Caco-2 (cell line): ENCODE measurements at regions of chr6 and their contacts with region 1.

Region 1: GRCh38 chr6:130885392-130886192 is 58.4 kb downstream of the SMLR1 start:
- DNase-seq: peak; percentile 79 to 82
- H3K4me3 ChIP-seq: no peak overlapping the region
- H3K4me3 Mint-ChIP-seq: no peak overlapping the region
- H3K27ac Mint-ChIP-seq: peak overlapping the region; percentile 23
- H3K4me1 ChIP-seq: no peaks in the 10 kb centered on the region
- H3K4me1 Mint-ChIP-seq: peaks cover 13% of the 10 kb centered on the region
- H3K27me3 ChIP-seq: no peaks in the 10 kb centered on the region
- H3K27me3 Mint-ChIP-seq: no peaks in the 10 kb centered on the region
- CTCF ChIP-seq: peak; percentile 81 to 87

Region 2: GRCh38 chr6:130671577-130671976 is 214.0 kb before region 1 on chr6:
- CTCF ChIA-PET with region 1: no interaction called
- POLR2A ChIA-PET with region 1: no interaction called
- intact Hi-C with region 1: no loop called
- DNase-seq: no peak
- H3K4me3 ChIP-seq: no peak overlapping the region
- H3K4me3 Mint-ChIP-seq: no peak overlapping the region
- H3K27ac Mint-ChIP-seq: no peak overlapping the region
- H3K4me1 ChIP-seq: no peaks in the 10 kb centered on the region
- H3K4me1 Mint-ChIP-seq: no peaks in the 10 kb centered on the region
- H3K27me3 ChIP-seq: no peaks in the 10 kb centered on the region
- H3K27me3 Mint-ChIP-seq: peaks cover 2% of the 10 kb centered on the region
- CTCF ChIP-seq: no peak

Region 3: GRCh38 chr6:130848945-130849344 is 36.6 kb before region 1 on chr6:
- CTCF ChIA-PET with region 1: no interaction called
- POLR2A ChIA-PET with region 1: no interaction called
- intact Hi-C with region 1: no loop called
- DNase-seq: no peak
- H3K4me3 ChIP-seq: no peak overlapping the region
- H3K4me3 Mint-ChIP-seq: no peak overlapping the region
- H3K27ac Mint-ChIP-seq: no peak overlapping the region
- H3K4me1 ChIP-seq: peaks cover 12% of the 10 kb centered on the region
- H3K4me1 Mint-ChIP-seq: peaks cover 2% of the 10 kb centered on the region
- H3K27me3 ChIP-seq: no peaks in the 10 kb centered on the region
- H3K27me3 Mint-ChIP-seq: no peaks in the 10 kb centered on the region
- CTCF ChIP-seq: no peak

Region 4: GRCh38 chr6:130933712-130934200 is 48.2 kb after region 1 on chr6:
- CTCF ChIA-PET with region 1: no interaction called
- POLR2A ChIA-PET with region 1: no interaction called
- intact Hi-C with region 1: loop called (anchors 5 kb)
- DNase-seq: peak; percentile 48 to 67
- H3K4me3 ChIP-seq: peak overlapping the region; percentile 13
- H3K4me3 Mint-ChIP-seq: peak overlapping the region; percentile 72
- H3K27ac Mint-ChIP-seq: peak overlapping the region; percentile 63
- H3K4me1 ChIP-seq: peaks cover 57% of the 10 kb centered on the region
- H3K4me1 Mint-ChIP-seq: peaks cover 34% of the 10 kb centered on the region
- H3K27me3 ChIP-seq: no peaks in the 10 kb centered on the region
- H3K27me3 Mint-ChIP-seq: no peaks in the 10 kb centered on the region
- CTCF ChIP-seq: no peak

Region 5: GRCh38 chr6:131063028-131063763 is 177.6 kb after region 1 on chr6 and contains the start of gene EPB41L2:
- CTCF ChIA-PET with region 1: interaction called, 3 read pairs
- POLR2A ChIA-PET with region 1: no interaction called
- intact Hi-C with region 1: loop called (anchors 1 kb)
- DNase-seq: peak; percentile 91 to 95
- H3K4me3 ChIP-seq: peak within 1 kb of the TSS; percentile 97
- H3K4me3 Mint-ChIP-seq: peak within 1 kb of the TSS; percentile 80
- H3K27ac Mint-ChIP-seq: peak within 1 kb of the TSS; percentile 70
- H3K4me1 ChIP-seq: peaks cover 31% of the 10 kb centered on the region
- H3K4me1 Mint-ChIP-seq: peaks cover 25% of the 10 kb centered on the region
- H3K27me3 ChIP-seq: no peaks in the 10 kb centered on the region
- H3K27me3 Mint-ChIP-seq: no peaks in the 10 kb centered on the region
- CTCF ChIP-seq: peak; percentile 19 to 20
- total RNA-seq, gene EPB41L2: 91.7 and 106 TPM in 2 replicates

Region 6: GRCh38 chr6:131116749-131117360 is 231.3 kb after region 1 on chr6:
- CTCF ChIA-PET with region 1: interaction called, 18 read pairs
- POLR2A ChIA-PET with region 1: no interaction called
- intact Hi-C with region 1: loop called (anchors 1 kb)
- DNase-seq: peak in 1 of 2 experiments; percentile 56
- H3K4me3 ChIP-seq: no peak overlapping the region
- H3K4me3 Mint-ChIP-seq: no peak overlapping the region
- H3K27ac Mint-ChIP-seq: no peak overlapping the region
- H3K4me1 ChIP-seq: peaks cover 7% of the 10 kb centered on the region
- H3K4me1 Mint-ChIP-seq: no peaks in the 10 kb centered on the region
- H3K27me3 ChIP-seq: no peaks in the 10 kb centered on the region
- H3K27me3 Mint-ChIP-seq: no peaks in the 10 kb centered on the region
- CTCF ChIP-seq: peak in 1 of 2 experiments; percentile 64

Region 7: DNA sequence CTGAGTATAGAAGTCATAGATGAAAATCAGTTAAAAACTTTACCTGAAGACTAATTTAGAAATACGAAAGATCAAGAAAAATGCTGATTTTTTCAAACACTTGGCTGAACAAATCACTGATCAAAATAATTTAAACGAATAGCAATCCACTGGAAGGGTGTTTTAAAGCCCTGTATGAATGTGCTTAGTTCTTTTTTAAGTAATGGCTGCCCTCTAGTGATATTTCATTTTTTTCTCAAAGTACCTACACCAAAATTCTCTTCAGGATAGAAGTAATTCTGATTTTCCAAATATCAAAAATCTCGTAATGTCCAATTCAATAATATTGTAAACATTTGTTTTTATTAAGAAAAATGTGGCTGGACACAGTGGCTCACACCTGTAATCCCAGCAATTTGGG is 282.2 kb after region 1 on chr6:
- CTCF ChIA-PET with region 1: interaction called, 7 read pairs
- POLR2A ChIA-PET with region 1: no interaction called
- intact Hi-C with region 1: loop called (anchors 1 kb)
- DNase-seq: no peak
- H3K4me3 ChIP-seq: no peak overlapping the region
- H3K4me3 Mint-ChIP-seq: no peak overlapping the region
- H3K27ac Mint-ChIP-seq: no peak overlapping the region
- H3K4me1 ChIP-seq: peaks cover 16% of the 10 kb centered on the region
- H3K4me1 Mint-ChIP-seq: peaks cover 15% of the 10 kb centered on the region
- H3K27me3 ChIP-seq: no peaks in the 10 kb centered on the region
- H3K27me3 Mint-ChIP-seq: no peaks in the 10 kb centered on the region
- CTCF ChIP-seq: no peak

Region 8: GRCh38 chr6:131532580-131533039 is 647.0 kb after region 1 on chr6:
- CTCF ChIA-PET with region 1: interaction called, 4 read pairs
- POLR2A ChIA-PET with region 1: no interaction called
- intact Hi-C with region 1: loop called (anchors 1 kb)
- DNase-seq: no peak
- H3K4me3 ChIP-seq: no peak overlapping the region
- H3K4me3 Mint-ChIP-seq: no peak overlapping the region
- H3K27ac Mint-ChIP-seq: no peak overlapping the region
- H3K4me1 ChIP-seq: no peaks in the 10 kb centered on the region
- H3K4me1 Mint-ChIP-seq: no peaks in the 10 kb centered on the region
- H3K27me3 ChIP-seq: no peaks in the 10 kb centered on the region
- H3K27me3 Mint-ChIP-seq: no peaks in the 10 kb centered on the region
- CTCF ChIP-seq: no peak

Region 9: GRCh38 chr6:131627724-131628682 is 742.4 kb after region 1 on chr6 and contains the start of gene MED23:
- CTCF ChIA-PET with region 1: interaction called, 5 read pairs
- POLR2A ChIA-PET with region 1: no interaction called
- intact Hi-C with region 1: loop called (anchors 10 kb)
- DNase-seq: peak; percentile 95 to 97
- H3K4me3 ChIP-seq: peak within 1 kb of the TSS; percentile 82
- H3K4me3 Mint-ChIP-seq: peak within 1 kb of the TSS; percentile 89
- H3K27ac Mint-ChIP-seq: peak within 1 kb of the TSS; percentile 84
- H3K4me1 ChIP-seq: 0 out of 2 replicates have a peak, but pooled peaks cover 5% of the 10 kb centered on the region
- H3K4me1 Mint-ChIP-seq: no peaks in the 10 kb centered on the region
- H3K27me3 ChIP-seq: no peaks in the 10 kb centered on the region
- H3K27me3 Mint-ChIP-seq: no peaks in the 10 kb centered on the region
- CTCF ChIP-seq: peak; percentile 98 to 100
- total RNA-seq, gene MED23: 19.1 and 22.4 TPM in 2 replicates